ENCODE measurements at regions of chr3 and their contacts with region 1.

Region 1: DNA sequence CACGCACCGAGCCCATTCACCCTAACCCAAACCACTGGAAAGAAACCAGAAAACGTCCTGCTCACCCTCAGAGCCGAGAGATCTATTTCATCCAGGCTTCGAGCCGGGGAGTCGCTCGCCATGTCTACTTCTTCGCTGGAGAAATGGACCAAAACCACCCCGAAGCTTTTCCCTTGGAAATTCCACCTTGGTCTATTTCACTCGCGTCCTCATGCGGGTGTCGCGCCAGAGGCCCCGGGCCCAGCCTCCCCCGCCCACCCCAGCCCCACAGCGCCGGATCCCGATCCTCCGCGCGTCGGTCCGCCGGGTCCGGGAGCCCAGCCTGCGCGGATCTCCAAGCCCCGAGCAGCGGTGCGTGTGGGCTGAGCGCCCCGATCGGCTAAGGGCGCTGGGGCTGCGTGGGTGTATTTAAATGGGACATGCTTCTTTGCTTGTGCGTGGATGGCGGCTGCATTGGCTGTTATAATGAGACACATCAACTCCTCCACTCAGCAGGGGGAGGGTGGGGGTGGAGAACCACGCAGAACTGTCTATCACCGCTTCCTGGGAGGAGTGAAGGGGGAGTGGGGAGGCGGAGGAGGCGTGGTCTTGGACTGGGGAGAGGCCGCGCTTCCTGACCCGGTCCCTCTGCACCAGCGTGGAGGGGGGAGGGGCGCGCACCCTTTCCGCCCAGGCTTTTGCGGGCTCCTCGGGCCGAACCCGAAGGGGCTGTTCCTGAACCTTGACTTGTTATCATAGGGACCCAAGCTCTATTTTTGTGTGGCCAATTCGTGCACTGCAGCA is at the start of gene TNIK:
- DNase-seq: peak; percentile 91 to 97 (median 96)
- ATAC-seq: peak; percentile 98
- H3K4me3 ChIP-seq: peak within 1 kb of the TSS; percentile 70
- H3K27ac ChIP-seq: peak within 1 kb of the TSS; percentile 40
- H3K4me1 ChIP-seq: peaks cover 3% of the 10 kb centered on the region
- H3K27me3 ChIP-seq: no peaks in the 10 kb centered on the region
- total RNA-seq, gene TNIK: 17.1 to 27.4 (median 22.8) TPM

Region 2: DNA sequence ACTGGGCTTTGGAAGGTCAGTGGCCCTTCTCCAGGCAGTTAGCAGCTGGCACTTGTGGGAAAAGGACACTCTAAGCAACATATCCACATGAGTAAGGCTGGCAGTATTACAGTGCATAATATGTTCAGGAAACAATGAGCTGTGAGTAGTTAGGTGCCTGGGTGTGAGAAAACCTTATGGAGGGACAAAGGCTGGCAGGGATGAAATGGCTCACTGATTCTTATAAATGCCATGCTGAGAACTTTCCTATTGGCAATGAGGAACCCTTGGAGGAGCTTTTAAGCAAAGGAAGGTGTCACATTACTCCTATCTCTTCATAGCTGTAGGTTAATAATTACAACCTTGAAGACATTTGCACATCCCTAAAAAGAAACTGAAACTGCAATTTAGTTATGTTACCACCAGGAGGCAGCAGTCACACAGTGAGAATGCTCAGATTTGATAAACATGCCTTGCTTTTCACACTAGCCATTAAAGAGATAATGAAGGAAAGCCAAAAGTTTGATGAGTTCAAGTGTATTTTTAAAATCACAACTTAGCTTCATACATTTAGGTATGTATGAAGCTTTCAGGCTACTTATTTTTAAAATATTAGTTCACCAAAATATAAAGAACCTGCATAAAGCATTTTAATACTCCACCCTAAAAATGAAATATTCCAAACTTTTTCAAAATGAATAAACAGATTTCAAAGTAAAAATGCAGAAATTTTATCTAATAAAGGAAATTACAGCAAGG is 297.0 kb before region 1 on chr3:
- intact Hi-C with region 1: no loop called
- DNase-seq: no peak
- ATAC-seq: no peak
- H3K4me3 ChIP-seq: no peak overlapping the region
- H3K27ac ChIP-seq: no peak overlapping the region
- H3K4me1 ChIP-seq: no peaks in the 10 kb centered on the region
- H3K27me3 ChIP-seq: no peaks in the 10 kb centered on the region

Region 3: GRCh38 chr3:171328419-171329082 is 131.6 kb before region 1 on chr3:
- intact Hi-C with region 1: loop called in 1 of 4 experiments (anchors 10 kb)
- DNase-seq: peak in 1 of 3 donors; percentile 49
- ATAC-seq: peak; percentile 32 to 39
- H3K4me3 ChIP-seq: no peak overlapping the region
- H3K27ac ChIP-seq: no peak overlapping the region
- H3K4me1 ChIP-seq: peaks cover 2% of the 10 kb centered on the region
- H3K27me3 ChIP-seq: no peaks in the 10 kb centered on the region

Region 4: GRCh38 chr3:171556148-171557145 is 96.3 kb after region 1 on chr3:
- intact Hi-C with region 1: loop called in 2 of 4 experiments (anchors 10 kb)
- DNase-seq: peak; percentile 24 to 72 (median 71)
- ATAC-seq: peak; percentile 86 to 87
- H3K4me3 ChIP-seq: no peak overlapping the region
- H3K27ac ChIP-seq: no peak overlapping the region
- H3K4me1 ChIP-seq: no peaks in the 10 kb centered on the region
- H3K27me3 ChIP-seq: no peaks in the 10 kb centered on the region